ENCODE measurements at regions of chr4 and their contacts with region 1.

Region 1: DNA sequence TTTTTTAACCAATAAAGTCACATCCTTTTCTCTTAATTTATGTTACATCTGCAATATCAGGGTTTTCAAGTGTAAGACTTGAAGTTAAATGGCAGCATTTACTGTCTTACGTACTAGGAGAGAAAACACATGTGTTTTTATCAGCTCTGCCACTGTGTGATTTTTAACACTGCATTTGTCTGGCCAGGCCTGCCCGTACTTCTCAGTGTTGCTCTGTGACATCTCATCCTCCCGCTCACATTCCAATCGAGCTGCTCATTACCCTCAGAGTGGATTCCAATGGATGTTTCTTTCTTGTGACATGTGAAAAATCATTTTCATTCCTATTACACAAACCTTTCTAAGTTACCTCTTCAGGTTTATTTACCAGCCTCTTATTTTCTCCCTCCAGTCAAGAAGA is 420.3 kb downstream of the FAT4 start:
- DNase-seq: peak in 3 of 5 donors; percentile 49 to 86 (median 73)
- H3K4me3 ChIP-seq: no peak overlapping the region
- H3K27ac ChIP-seq: peak overlapping the region in 1 of 2 donors; percentile 14
- H3K4me1 ChIP-seq: peaks cover 2 to 4% (median 3%) of the 10 kb centered on the region in 3 donors
- H3K27me3 ChIP-seq: no peaks in the 10 kb centered on the region
- CTCF ChIP-seq: no peak

Region 2: GRCh38 chr4:125314676-125315575 is 420.2 kb before region 1 on chr4 and contains the start of gene FAT4:
- intact Hi-C with region 1: loop called (anchors 10 kb)
- DNase-seq: peak; percentile 97 to 99 (median 97)
- H3K4me3 ChIP-seq: peak within 1 kb of the TSS; percentile 83 to 93 (median 90)
- H3K27ac ChIP-seq: peak within 1 kb of the TSS; percentile 90 to 91
- H3K4me1 ChIP-seq: peaks cover 0 to 27% (median 0%) of the 10 kb centered on the region in 3 donors
- H3K27me3 ChIP-seq: no peaks in the 10 kb centered on the region
- CTCF ChIP-seq: peak; percentile 20
- total RNA-seq, gene FAT4: 11.3 TPM